ENCODE measurements at regions of chr2 and their contacts with region 1.

Region 1: DNA sequence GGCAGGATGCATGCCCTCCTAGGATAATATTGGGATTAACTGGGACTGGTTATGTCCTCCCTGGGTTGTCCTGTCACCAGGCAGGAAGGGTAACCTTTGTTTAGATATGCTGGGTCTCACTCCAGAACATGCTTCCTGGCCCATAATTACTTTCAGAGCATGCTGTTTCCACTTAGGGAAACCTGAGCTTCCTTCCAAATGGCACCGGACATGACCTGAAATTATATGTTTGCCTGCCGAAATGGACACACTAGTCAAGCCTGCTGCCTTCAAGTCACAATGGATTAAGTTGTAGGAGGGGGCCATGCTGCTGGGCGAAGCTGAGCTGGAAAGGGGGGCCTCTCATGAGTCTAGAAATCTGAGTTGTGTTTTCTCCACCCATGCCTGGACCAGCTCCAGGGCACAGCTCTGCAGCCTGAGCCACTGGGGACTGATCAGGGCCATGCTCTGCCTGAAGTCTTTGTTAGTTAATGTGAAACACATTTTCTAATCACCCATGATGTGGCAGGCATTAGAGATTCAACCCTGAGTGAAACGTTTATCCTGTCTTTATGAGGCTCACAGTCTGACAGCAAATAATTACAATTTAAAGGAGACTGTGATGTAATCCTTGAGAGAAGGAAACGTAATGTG is 273.3 kb downstream of the TNS1 start:
- DNase-seq: no peak
- H3K4me3 ChIP-seq: no peak overlapping the region
- H3K27ac ChIP-seq: peak overlapping the region in 2 of 4 donors; percentile 42
- H3K4me1 ChIP-seq: peaks cover 4 to 35% (median 4%) of the 10 kb centered on the region in 3 donors
- H3K27me3 ChIP-seq: no peaks in the 10 kb centered on the region
- CTCF ChIP-seq: no peak
- POLR2A ChIP-seq: no peak

Region 2: GRCh38 chr2:217482056-217482710 is 247.4 kb before region 1 on chr2:
- intact Hi-C with region 1: no loop called
- DNase-seq: no peak
- H3K4me3 ChIP-seq: no peak overlapping the region
- H3K27ac ChIP-seq: no peak overlapping the region
- H3K4me1 ChIP-seq: no peaks in the 10 kb centered on the region
- H3K27me3 ChIP-seq: no peaks in the 10 kb centered on the region
- CTCF ChIP-seq: no peak
- POLR2A ChIP-seq: no peak

Region 3: GRCh38 chr2:217538719-217539118 is 190.8 kb before region 1 on chr2:
- intact Hi-C with region 1: loop called (anchors 10 kb)
- DNase-seq: no peak
- H3K4me3 ChIP-seq: no peak overlapping the region
- H3K27ac ChIP-seq: no peak overlapping the region
- H3K4me1 ChIP-seq: no peaks in the 10 kb centered on the region
- H3K27me3 ChIP-seq: no peaks in the 10 kb centered on the region
- CTCF ChIP-seq: no peak
- POLR2A ChIP-seq: no peak

Region 4: DNA sequence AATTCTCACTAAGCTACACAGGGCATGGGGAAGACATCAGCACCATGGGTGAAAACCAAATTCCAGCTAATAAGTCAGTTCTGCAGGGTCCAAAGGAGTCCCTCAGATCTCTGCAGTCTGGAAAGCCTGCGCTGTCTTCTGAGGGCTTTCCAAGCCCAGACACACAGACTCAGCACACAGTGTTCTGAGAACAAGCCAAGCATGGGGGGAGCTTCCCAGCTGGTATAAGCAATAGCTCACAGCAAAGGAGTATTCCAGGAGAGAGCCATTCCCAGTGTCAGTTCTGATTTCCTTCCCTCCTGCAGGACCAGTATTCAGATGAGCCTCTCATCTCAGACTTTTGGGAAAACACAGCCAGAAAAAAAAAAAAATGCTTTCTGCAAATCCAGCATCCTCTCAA is 97.5 kb before region 1 on chr2:
- intact Hi-C with region 1: no loop called
- DNase-seq: no peak
- H3K4me3 ChIP-seq: no peak overlapping the region
- H3K27ac ChIP-seq: peak overlapping the region in 3 of 4 donors; percentile 11 to 63 (median 53)
- H3K4me1 ChIP-seq: peaks cover 0 to 32% (median 3%) of the 10 kb centered on the region in 3 donors
- H3K27me3 ChIP-seq: no peaks in the 10 kb centered on the region
- CTCF ChIP-seq: no peak
- POLR2A ChIP-seq: peak in 1 of 4 donors; percentile 23

Region 5: DNA sequence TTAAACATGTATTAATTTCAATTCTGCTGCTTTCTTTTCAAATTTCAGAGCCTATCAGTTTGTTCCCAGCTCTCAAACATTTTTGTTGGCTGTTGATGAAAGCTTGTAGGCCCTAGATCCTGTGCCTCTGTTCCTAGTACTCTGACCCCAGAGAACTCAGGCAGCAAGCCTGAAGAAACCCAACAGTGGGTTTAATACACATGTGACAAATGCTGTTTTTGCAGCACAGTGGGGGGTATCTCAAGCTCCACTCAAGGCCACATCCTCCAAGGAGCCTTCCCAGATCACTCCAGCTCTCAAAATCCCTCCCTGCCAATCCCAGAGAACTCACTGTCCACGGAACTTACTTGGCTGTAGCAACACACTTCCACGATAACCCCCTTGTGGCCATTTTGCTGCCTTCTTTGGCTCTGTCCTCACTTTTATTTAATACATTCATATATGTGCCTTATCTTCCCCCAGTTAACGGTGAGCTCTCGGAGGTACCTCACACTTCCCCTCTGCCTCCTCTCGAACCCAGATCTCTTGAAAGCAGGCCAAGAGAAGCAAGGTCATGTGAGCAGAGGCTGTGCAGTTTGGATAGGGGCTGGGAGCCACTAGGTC is 150.9 kb after region 1 on chr2:
- intact Hi-C with region 1: no loop called
- DNase-seq: no peak
- H3K4me3 ChIP-seq: no peak overlapping the region
- H3K27ac ChIP-seq: peak overlapping the region in 3 of 4 donors; percentile 13 to 69 (median 54)
- H3K4me1 ChIP-seq: peaks cover 0 to 61% (median 11%) of the 10 kb centered on the region in 3 donors
- H3K27me3 ChIP-seq: no peaks in the 10 kb centered on the region
- CTCF ChIP-seq: peak in 1 of 6 experiments; percentile 19
- POLR2A ChIP-seq: no peak